CD8-positive, alpha-beta memory T cell (primary cell): ENCODE measurements at regions of chr7 and their contacts with region 1.

Region 1: GRCh38 chr7:39580149-39580874 is 14.1 kb downstream of the YAE1 start:
- DNase-seq: peak; percentile 59 to 82 (median 66)
- H3K4me3 ChIP-seq: no peak overlapping the region
- H3K4me3 Mint-ChIP-seq: no peak overlapping the region
- H3K27ac ChIP-seq: no peak overlapping the region
- H3K27ac Mint-ChIP-seq: peak overlapping the region in 1 of 8 donors; percentile 10
- H3K4me1 ChIP-seq: no peaks in the 10 kb centered on the region
- H3K4me1 Mint-ChIP-seq: peaks cover 3 to 4% (median 4%) of the 10 kb centered on the region in 3 donors
- H3K27me3 ChIP-seq: no peaks in the 10 kb centered on the region
- H3K27me3 Mint-ChIP-seq: no peaks in the 10 kb centered on the region

Region 2: GRCh38 chr7:39541511-39541910 is 38.8 kb before region 1 on chr7:
- CTCF ChIA-PET with region 1: no interaction called
- POLR2A ChIA-PET with region 1: no interaction called
- DNase-seq: no peak
- H3K4me3 ChIP-seq: no peak overlapping the region
- H3K4me3 Mint-ChIP-seq: no peak overlapping the region
- H3K27ac ChIP-seq: no peak overlapping the region
- H3K27ac Mint-ChIP-seq: no peak overlapping the region
- H3K4me1 ChIP-seq: no peaks in the 10 kb centered on the region
- H3K4me1 Mint-ChIP-seq: no peaks in the 10 kb centered on the region
- H3K27me3 ChIP-seq: no peaks in the 10 kb centered on the region
- H3K27me3 Mint-ChIP-seq: peaks cover 5 to 9% of the 10 kb centered on the region in 2 donors

Region 3: GRCh38 chr7:39732837-39733804 is 152.8 kb after region 1 on chr7:
- CTCF ChIA-PET with region 1: interaction called, 346 read pairs
- POLR2A ChIA-PET with region 1: interaction called, 5 read pairs
- DNase-seq: peak; percentile 87 to 97 (median 92)
- H3K4me3 ChIP-seq: peak overlapping the region; percentile 75
- H3K4me3 Mint-ChIP-seq: peak overlapping the region; percentile 91 to 98 (median 94)
- H3K27ac ChIP-seq: peak overlapping the region; percentile 85
- H3K27ac Mint-ChIP-seq: peak overlapping the region; percentile 91 to 99 (median 97)
- H3K4me1 ChIP-seq: peaks cover 25% of the 10 kb centered on the region
- H3K4me1 Mint-ChIP-seq: peaks cover 41 to 65% (median 47%) of the 10 kb centered on the region in 3 donors
- H3K27me3 ChIP-seq: no peaks in the 10 kb centered on the region
- H3K27me3 Mint-ChIP-seq: no peaks in the 10 kb centered on the region

Region 4: DNA sequence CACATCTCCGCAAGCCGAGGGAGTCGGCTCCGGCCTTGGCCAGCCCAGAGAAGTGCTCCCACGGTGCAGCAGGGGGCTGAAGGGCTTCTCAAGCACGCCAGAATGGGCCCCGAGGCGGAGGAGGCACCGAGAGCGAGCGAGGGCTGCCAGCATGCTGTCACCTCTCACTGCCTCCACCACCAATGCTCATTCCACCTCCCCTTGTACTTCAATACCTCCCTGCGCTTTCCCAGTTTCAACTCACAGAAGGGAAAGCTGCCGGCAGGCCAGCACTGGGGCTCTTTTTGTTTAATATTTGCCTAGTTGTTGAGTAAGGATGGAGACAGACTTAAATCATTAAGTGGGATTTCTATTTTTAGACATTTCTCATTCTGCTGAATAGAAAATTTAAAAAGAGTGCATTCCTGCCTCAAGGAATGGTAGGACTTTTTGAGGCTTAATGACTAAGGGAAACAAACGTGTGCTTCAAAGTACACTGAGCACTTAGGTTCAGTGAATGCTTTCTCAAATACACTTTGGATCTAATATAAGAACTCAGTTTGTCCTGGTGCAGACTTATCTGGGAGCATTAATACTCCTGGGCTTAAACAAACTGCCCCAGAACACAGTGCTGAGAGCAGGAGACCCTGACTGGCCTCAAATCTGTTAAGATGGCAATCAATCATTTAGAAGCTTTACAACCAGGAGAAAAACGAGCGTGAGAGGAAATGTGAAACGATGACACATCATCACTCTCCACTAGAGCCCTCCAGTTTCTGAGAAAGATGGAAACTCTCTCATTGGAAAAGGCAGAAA is 174.2 kb after region 1 on chr7:
- CTCF ChIA-PET with region 1: interaction called, 346 read pairs
- POLR2A ChIA-PET with region 1: no interaction called
- DNase-seq: no peak
- H3K4me3 ChIP-seq: no peak overlapping the region
- H3K4me3 Mint-ChIP-seq: no peak overlapping the region
- H3K27ac ChIP-seq: no peak overlapping the region
- H3K27ac Mint-ChIP-seq: no peak overlapping the region
- H3K4me1 ChIP-seq: no peaks in the 10 kb centered on the region
- H3K4me1 Mint-ChIP-seq: peaks cover 0 to 2% (median 0%) of the 10 kb centered on the region in 3 donors
- H3K27me3 ChIP-seq: no peaks in the 10 kb centered on the region
- H3K27me3 Mint-ChIP-seq: no peaks in the 10 kb centered on the region